Activated CD4-positive, alpha-beta memory T cell treated with anti-CD3 and anti-CD28 coated beads for 36 hours (primary cell): ENCODE measurements at regions of chr7 and their contacts with region 1.

Region 1: DNA sequence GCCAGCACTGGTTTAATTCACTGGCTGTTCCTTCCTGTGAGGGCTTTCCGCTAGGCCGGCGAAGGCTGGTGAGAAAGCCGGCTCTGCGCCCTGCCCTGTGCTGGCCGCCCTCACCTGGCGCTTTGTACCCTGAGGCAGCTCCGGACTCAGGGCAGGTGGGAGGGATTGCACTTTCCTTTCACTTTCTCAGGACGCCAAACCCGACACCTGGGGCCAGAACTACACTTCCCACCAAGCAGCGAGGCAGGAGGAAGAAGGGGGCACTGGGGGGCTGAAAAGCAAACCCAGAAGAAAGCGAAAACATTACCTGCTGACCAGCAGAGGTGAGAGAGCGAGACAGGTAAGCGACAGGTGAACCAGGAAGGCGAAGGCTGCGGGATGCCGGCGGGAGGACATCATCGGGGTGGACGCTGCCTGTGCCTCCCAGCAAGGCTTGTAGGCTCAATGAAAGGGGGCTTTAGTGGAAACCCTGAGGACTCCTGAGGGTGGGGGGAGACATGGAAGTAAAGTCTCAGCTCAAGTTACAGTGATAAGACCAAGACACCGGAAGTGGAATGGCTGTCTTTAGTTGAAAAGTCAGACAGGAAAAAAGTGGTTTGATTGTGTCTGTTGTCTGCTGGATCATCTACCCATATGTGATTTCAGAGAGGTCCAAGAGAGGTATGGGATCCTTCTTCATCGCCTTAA is at the start of gene RAB19:
- DNase-seq: peak; percentile 61
- H3K4me3 Mint-ChIP-seq: peak within 1 kb of the TSS; percentile 87
- H3K27ac Mint-ChIP-seq: peak within 1 kb of the TSS; percentile 92
- H3K4me1 Mint-ChIP-seq: peaks cover 33% of the 10 kb centered on the region
- H3K27me3 Mint-ChIP-seq: no peaks in the 10 kb centered on the region
- total RNA-seq, gene RAB19: 13.3 to 14.5 TPM

Region 2: DNA sequence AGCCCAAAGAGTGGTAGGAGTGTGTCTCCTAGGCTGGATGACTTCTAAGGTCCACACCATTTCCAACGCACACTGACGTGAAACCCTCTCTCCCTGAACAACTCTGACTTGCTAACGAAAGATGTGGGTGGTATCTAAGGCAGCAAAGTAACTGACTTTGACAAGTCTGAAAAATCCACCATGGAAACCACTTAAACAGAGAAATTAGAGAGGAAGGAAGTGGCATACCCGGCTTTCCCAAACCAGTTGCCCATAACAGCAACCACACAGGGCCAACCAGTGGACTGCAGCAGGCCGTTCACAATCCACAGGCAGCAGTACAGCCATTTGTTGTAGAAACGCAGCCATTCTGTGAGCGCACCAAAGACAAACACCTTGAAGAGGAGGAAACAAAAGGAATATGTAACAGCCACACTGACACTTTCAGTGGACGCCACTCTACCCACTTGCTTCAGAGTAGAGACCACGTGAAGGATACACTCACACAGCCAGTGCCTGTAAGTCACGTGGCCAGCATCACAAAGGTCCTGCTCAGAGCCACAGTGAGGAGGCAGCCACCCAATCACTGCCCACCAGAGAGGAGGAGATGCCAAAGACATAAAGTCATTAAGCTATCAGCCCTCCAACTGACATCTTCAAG is 45.5 kb before region 1 on chr7:
- CTCF ChIA-PET with region 1: no interaction called
- POLR2A ChIA-PET with region 1: interaction called, 3 read pairs
- intact Hi-C with region 1: loop called (anchors 2 kb)
- DNase-seq: peak; percentile 69
- H3K4me3 Mint-ChIP-seq: peak overlapping the region; percentile 46
- H3K27ac Mint-ChIP-seq: peak overlapping the region; percentile 97
- H3K4me1 Mint-ChIP-seq: peaks cover 34% of the 10 kb centered on the region
- H3K27me3 Mint-ChIP-seq: no peaks in the 10 kb centered on the region

Region 3: GRCh38 chr7:140390466-140391190 is 13.4 kb before region 1 on chr7:
- CTCF ChIA-PET with region 1: no interaction called
- POLR2A ChIA-PET with region 1: interaction called, 3 read pairs
- intact Hi-C with region 1: loop called (anchors 2 kb)
- DNase-seq: peak; percentile 65
- H3K4me3 Mint-ChIP-seq: no peak overlapping the region
- H3K27ac Mint-ChIP-seq: no peak overlapping the region
- H3K4me1 Mint-ChIP-seq: peaks cover 10% of the 10 kb centered on the region
- H3K27me3 Mint-ChIP-seq: no peaks in the 10 kb centered on the region

Region 4: GRCh38 chr7:140439359-140439758 is 35.3 kb after region 1 on chr7:
- CTCF ChIA-PET with region 1: no interaction called
- POLR2A ChIA-PET with region 1: no interaction called
- intact Hi-C with region 1: loop called (anchors 2 kb)
- DNase-seq: no peak
- H3K4me3 Mint-ChIP-seq: no peak overlapping the region
- H3K27ac Mint-ChIP-seq: peak overlapping the region; percentile 88
- H3K4me1 Mint-ChIP-seq: peaks cover 13% of the 10 kb centered on the region
- H3K27me3 Mint-ChIP-seq: no peaks in the 10 kb centered on the region

Region 5: DNA sequence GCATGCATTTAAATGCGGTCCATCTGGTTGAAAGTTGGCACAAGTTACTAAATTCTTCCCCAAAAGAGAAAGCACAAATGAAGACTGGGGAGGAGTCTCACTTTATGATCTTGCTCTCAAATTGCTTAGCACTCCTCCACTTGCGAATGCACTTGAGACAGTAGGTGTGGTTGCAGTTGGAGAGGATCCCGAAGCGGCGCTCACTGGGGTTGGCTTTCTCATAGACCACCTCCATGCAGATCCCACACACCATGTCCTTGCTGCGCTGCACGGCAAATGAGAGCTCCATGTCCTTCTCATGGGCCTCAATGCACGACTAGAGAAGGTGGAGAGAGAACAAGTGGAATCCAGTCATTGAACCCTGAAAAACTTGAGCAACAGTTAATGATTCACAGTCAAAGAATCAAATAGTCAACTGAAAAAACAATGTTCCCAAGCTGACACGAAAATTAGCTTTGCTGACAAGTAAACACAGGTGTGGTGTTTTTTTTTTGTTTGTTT is 52.6 kb after region 1 on chr7:
- CTCF ChIA-PET with region 1: no interaction called
- POLR2A ChIA-PET with region 1: no interaction called
- intact Hi-C with region 1: loop called (anchors 5 kb)
- DNase-seq: no peak
- H3K4me3 Mint-ChIP-seq: no peak overlapping the region
- H3K27ac Mint-ChIP-seq: peak overlapping the region; percentile 40
- H3K4me1 Mint-ChIP-seq: peaks cover 51% of the 10 kb centered on the region
- H3K27me3 Mint-ChIP-seq: no peaks in the 10 kb centered on the region

Region 6: DNA sequence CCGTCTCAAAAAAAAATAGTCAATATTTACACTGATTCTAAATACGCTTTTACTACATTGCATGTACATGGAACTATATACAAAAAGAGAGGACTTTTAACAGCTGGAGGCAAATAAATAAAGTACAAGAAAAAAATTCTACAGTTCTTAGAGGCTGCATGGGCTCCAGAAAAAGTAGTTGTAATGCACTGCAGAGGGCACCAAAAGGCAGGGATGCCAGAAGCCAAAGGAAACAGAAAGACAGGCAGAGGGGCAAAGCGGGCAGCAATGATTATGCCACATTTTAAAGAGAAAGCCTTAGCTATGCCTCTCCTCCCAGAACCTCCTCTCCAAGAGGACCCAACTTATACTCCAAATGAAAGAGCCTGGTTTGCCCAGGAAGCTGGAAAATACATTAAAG is 257.1 kb after region 1 on chr7:
- CTCF ChIA-PET with region 1: no interaction called
- POLR2A ChIA-PET with region 1: no interaction called
- intact Hi-C with region 1: no loop called
- DNase-seq: no peak
- H3K4me3 Mint-ChIP-seq: no peak overlapping the region
- H3K27ac Mint-ChIP-seq: no peak overlapping the region
- H3K4me1 Mint-ChIP-seq: peaks cover 10% of the 10 kb centered on the region
- H3K27me3 Mint-ChIP-seq: peaks cover 2% of the 10 kb centered on the region